GM10248 (cell line): ENCODE measurements at regions of chr12 and their contacts with region 1.

Region 1: DNA sequence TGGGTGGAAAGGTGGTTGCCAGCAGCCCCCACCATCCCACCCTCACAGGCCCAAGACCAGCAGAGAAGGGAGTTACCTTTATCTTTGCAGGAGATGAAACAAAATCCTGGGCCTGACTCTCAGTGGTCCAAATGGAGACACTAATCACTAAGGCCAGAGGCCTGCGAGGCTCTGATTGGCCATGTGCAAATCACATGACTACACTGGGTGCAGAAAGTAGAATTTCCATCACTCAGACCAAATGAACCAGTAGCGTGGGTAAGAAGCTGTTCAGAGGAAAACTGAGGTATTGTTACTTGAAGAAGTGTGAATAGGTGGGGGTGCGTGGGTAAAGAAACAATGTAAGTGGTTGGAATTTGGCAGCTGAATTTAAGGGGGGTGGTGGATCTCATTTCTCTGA is 20.2 kb upstream of the PPP1CC start:
- DNase-seq: no peak
- CTCF ChIP-seq: no peak

Region 2: DNA sequence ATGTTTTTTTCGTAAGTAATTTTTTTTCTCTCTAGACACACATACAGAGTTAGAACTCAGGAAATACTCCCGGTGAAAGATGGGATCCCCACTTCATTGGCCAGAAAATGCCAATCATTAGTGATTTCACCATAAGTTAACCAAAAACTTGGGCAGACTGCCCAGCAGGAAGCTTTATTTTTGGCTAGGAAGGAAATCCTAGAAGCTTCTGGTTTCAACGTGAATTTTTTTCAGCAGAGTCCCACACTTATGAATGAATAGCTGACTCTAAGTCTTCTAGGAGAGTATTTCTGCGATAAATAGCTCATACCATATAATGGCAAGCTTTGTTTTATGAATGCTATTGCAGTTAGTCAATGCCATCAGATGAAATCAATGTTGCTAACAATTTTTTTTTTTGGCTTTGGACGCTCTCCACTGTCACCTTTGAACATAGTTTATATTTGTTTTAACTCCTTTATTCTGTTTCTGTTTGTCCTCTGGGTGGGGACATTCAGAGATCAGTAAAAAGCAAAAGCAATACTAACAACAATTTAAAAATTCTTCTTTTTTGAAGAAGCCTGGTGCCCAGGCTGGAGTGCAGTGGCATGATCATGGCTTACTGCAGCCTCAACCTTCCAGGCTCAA is 29.7 kb before region 1 on chr12:
- CTCF ChIA-PET with region 1: interaction called, 3 read pairs
- POLR2A ChIA-PET with region 1: interaction called, 14 read pairs
- DNase-seq: no peak
- CTCF ChIP-seq: no peak

Region 3: GRCh38 chr12:110966081-110966760 is 203.3 kb after region 1 on chr12:
- CTCF ChIA-PET with region 1: no interaction called
- POLR2A ChIA-PET with region 1: no interaction called
- DNase-seq: no peak
- CTCF ChIP-seq: no peak